AG04449 (cell line): ENCODE measurements at regions of chr17 and their contacts with region 1.

Region 1: GRCh38 chr17:27601069-27601975 is 29.7 kb upstream of the LGALS9 start:
- DNase-seq: no peak
- H3K4me3 ChIP-seq: no peak overlapping the region
- CTCF ChIP-seq: peak; percentile 85

Region 2: GRCh38 chr17:27315322-27315721 is 286.0 kb before region 1 on chr17:
- CTCF ChIA-PET with region 1: interaction called, 17 read pairs
- POLR2A ChIA-PET with region 1: no interaction called
- DNase-seq: peak; percentile 49
- H3K4me3 ChIP-seq: no peak overlapping the region
- CTCF ChIP-seq: no peak

Region 3: GRCh38 chr17:27407916-27408846 is 193.1 kb before region 1 on chr17:
- CTCF ChIA-PET with region 1: interaction called, 29 read pairs
- POLR2A ChIA-PET with region 1: no interaction called
- DNase-seq: no peak
- H3K4me3 ChIP-seq: no peak overlapping the region
- CTCF ChIP-seq: no peak

Region 4: DNA sequence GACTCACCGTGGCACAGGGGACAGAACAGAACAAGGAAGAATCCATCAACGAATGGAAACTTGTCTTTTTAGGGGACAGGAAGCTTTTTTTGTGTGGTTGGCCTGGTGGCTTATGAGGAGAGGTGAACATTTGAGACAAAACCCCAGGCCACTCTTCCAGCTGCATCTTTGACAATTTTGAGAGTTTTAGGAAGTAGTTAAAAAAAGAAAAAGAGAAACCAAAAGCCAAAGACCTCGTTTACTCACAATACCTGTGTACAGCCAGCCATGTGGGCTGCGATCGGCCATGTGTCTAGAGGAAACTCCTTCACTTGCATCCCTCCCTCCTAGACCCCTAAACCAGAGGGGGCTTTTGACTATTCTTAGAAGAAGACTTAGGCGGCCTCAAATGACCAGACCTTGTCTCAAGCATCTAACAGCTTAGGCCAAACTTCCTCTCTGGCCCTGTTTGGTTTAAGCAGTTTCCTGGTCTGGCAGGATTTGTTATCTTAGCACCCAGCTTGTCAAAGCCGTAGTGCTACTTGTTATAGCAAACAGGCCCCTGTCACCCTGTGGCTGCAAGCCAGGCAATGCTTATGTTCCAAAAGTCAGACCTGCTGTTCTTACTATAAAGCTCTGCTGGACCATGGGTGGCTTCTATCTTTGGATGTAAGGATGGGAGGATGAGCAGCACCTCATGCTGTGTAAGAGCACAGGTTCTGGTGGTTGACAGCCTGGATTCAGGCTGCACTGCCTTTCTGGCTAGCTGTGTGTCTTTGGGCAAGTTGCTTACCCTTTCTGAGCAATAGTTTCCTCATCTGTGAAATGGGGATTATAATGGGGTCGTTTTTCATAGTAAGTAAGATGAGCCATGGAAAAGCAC is 127.3 kb before region 1 on chr17:
- CTCF ChIA-PET with region 1: interaction called, 20 read pairs
- POLR2A ChIA-PET with region 1: no interaction called
- DNase-seq: no peak
- H3K4me3 ChIP-seq: no peak overlapping the region
- CTCF ChIP-seq: no peak

Region 5: DNA sequence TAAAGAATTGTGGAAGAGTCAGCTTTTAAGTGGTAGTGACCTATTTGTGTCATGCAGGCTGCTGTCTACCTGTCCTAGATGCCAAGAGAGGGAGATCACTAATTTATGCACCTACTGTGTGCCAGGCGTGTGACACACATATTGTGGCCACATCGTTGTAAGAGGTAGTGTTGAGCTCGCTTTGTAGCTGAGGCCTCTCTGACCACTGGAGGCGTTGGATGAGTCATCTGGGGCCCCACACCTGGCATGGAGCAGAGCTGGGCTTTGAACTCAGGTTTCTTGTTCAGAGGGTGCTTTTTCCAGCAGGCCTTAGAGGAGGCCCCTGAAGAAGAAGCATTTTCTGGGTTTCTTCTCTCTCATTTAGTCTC is 22.6 kb before region 1 on chr17:
- CTCF ChIA-PET with region 1: interaction called, 181 read pairs
- POLR2A ChIA-PET with region 1: no interaction called
- DNase-seq: no peak
- H3K4me3 ChIP-seq: no peak overlapping the region
- CTCF ChIP-seq: no peak

Region 6: DNA sequence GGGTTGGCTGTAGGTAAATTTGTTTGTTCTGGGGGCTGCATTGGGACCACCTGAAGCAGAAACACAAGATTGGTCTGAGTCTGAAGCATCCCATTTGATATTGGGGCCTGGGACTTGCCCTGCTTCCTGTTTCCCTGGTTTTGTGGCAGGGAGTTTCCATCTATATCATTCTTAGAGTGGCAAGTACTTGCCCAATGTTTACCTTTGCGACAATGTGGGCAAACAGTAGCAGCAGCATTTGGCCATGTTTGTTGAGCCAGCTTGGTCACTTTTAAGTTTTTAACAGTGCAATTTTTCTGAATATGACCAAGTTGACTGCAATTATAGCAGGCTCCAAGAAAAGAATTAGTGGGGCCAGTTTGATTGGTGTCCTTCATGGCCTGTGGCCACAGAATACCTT is 91.4 kb after region 1 on chr17:
- CTCF ChIA-PET with region 1: no interaction called
- POLR2A ChIA-PET with region 1: no interaction called
- DNase-seq: no peak
- H3K4me3 ChIP-seq: no peak overlapping the region
- CTCF ChIP-seq: no peak

Region 7: DNA sequence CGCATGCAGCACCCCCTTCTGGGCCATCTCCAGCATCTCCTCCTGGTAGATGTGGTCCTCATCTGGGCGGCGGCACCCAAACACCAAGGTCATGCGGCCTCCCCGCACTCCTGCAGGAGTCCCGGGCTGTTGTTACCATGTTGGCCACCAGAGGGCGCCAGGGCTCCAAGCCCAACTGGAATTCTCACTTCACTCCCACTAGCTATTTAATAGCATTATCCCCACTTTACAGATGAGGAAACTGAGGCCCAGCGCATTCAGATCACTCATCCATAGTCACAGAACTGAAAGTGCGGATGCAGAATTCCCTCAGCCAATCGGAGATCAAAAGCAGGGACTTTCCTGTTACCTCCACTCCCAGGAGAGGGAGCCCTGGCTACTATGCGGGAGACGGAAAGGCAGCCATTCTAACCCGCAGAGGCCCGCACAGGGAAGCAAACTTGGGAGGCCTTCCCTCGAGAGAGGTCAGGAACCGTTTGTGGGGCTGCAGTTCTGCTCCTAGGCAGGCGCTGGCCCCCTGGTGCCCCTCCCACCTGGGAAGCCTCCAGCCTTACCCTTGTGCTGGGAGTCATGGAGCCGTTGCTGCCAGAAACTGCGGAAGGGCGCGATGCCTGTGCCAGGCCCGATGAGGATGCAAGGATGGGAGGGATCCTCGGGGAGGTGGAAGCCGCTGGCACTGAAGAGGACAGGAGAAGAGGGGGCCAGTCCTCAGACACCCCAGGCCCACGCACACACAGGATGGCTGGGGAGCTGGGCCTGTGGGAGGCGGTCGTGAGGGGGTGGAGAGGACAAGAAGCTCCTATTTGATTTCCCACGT is 159.0 kb after region 1 on chr17:
- CTCF ChIA-PET with region 1: interaction called, 75 read pairs
- POLR2A ChIA-PET with region 1: no interaction called
- DNase-seq: no peak
- H3K4me3 ChIP-seq: no peak overlapping the region
- CTCF ChIP-seq: peak; percentile 78

Region 8: DNA sequence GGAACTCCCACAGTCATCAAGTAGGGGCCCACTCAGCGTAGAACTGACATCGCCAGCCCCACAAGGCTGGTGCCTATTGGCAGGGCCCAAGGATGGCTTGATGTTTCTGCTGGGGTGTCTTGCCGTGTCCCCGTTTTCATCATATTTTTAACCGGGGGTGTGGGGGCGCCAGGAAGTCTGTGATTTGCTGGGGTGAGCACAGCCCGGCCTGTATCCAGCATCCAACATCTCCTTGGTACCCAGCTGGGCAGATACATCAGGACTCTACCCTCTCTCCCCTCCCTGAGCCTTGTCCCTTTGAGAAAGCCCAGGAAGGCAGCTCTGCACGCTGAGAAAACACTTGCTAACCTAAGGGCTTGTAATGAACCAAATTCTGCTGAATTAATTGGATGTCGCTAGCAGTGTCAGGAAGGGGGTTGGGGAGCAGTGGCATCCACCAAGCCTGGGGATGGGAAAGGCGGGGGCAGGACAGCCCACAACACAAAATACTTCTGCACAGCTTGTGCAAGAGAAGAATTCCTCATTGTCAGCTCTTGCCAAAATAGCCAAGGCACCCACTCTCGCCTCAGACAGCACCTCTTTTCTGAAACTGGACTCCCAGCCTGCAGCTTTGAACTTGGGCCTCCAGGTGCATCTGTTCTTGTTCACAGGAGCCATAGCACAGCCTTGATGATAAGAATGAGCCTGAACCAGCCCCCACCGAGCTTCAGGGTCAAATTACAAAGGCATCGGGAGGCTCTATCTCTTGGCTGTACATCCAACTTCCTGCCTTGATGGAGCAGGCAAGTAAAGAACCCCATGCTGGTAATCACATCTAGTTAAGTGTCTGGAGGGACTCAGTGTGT is 355.5 kb after region 1 on chr17:
- CTCF ChIA-PET with region 1: no interaction called
- POLR2A ChIA-PET with region 1: no interaction called
- DNase-seq: no peak
- H3K4me3 ChIP-seq: no peak overlapping the region
- CTCF ChIP-seq: no peak